ENCODE measurements at regions of chr7 and their contacts with region 1.

Region 1: DNA sequence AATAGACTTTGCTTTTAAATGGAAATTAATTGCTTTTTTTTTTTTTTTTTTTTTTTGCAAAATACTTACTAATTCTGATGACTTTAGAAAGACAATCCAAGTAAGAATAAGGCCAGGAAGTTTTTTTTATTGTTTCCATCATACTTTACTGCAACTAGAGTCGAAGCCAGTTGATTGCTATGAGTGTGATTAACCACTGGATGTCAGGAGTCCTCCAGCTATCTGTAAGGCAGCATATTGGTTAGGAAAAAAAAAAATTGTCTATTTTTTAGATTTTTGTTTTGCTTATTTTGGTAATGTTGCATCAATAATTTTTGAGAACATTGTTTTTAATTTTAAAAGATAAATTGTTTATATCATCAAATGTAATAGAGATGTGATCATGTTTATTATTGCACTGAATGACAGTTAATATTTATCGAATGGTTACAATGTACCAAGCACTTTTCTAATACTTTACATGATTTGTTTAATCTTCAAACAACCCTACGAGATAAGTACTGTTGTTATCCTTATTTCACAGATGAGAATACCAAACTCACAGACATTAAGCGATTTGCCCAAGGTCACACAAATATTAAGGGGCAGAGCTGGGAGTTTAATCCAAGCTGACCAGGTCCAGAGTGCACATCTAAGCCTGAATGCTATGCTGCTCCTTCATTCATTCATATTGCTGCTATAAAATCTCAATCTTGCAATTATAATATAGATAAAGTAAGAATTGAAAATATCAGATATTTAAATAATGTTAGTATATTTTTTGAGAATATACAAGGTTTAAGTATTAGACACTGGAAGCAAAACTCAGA is 19.9 kb upstream of the LMOD2 start:
- DNase-seq: peak; percentile 64
- H3K4me3 ChIP-seq: no peak overlapping the region
- H3K27ac ChIP-seq: peak overlapping the region; percentile 18
- H3K4me1 ChIP-seq: peaks cover 28% of the 10 kb centered on the region
- H3K27me3 ChIP-seq: no peaks in the 10 kb centered on the region
- CTCF ChIP-seq: peak; percentile 44 to 52
- POLR2A ChIP-seq: no peak

Region 2: DNA sequence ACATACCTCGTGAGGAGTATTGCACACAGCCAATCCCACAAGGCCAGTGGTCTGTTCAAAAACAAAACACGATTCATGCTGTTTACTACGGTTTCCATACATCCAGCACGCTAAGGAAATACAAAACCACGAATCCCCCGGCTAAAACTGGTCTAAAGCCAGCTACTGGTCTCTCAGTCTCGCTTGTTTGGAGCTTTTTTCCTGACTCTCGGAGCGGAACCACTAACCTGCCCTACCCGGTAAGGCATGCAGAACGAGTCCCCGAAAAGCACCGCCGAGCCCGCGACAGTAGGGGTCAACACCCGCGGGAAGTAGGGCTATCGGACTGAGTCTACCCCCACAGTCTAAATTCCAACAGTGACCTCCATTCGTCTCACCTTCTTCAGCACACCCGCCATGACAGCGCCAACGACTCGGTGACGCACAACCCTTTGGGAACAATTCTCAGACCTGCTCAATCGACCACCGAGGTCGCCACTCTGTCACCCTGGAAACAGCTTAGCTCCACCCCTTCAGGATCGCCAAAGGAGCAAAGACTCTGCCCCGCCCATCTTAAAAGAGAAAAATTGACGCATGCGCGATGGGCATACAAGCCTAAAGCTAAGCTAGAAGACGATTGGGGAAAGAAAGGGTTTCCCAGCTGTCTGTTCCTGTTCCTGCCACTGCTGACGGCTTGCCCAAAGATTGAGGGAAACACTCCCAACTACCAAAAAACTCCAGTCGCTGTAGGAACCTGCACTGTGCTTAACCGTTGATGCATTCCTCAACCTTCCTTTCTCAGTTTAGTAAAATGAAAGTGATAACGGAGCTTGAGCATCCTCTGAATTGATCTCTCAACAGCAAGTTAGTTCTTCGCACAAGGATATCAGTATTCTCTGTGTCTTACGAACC is 78.1 kb before region 1 on chr7 and contains the start of gene NDUFA5:
- CTCF ChIA-PET with region 1: interaction called, 3 read pairs
- POLR2A ChIA-PET with region 1: no interaction called
- dilution Hi-C with region 1: no loop called
- intact Hi-C with region 1: loop called (anchors 1 kb)
- DNase-seq: peak; percentile 99
- H3K4me3 ChIP-seq: peak within 1 kb of the TSS; percentile 66 to 98 (median 88)
- H3K27ac ChIP-seq: peak within 1 kb of the TSS; percentile 75
- H3K4me1 ChIP-seq: peaks cover 6% of the 10 kb centered on the region
- H3K27me3 ChIP-seq: no peaks in the 10 kb centered on the region
- CTCF ChIP-seq: no peak
- POLR2A ChIP-seq: peak; percentile 76
- total RNA-seq, gene NDUFA5: 57.6 and 62.3 TPM in 2 replicates

Region 3: GRCh38 chr7:123705211-123705901 is 69.6 kb after region 1 on chr7:
- CTCF ChIA-PET with region 1: interaction called, 71 read pairs
- POLR2A ChIA-PET with region 1: no interaction called
- dilution Hi-C with region 1: no loop called
- intact Hi-C with region 1: loop called (anchors 1 kb)
- DNase-seq: no peak
- H3K4me3 ChIP-seq: no peak overlapping the region
- H3K27ac ChIP-seq: no peak overlapping the region
- H3K4me1 ChIP-seq: no peaks in the 10 kb centered on the region
- H3K27me3 ChIP-seq: no peaks in the 10 kb centered on the region
- CTCF ChIP-seq: no peak
- POLR2A ChIP-seq: no peak

Region 4: GRCh38 chr7:123865517-123866117 is 229.9 kb after region 1 on chr7:
- CTCF ChIA-PET with region 1: interaction called, 85 read pairs
- POLR2A ChIA-PET with region 1: no interaction called
- dilution Hi-C with region 1: no loop called
- intact Hi-C with region 1: loop called (anchors 1 kb)
- DNase-seq: peak; percentile 84
- H3K4me3 ChIP-seq: no peak overlapping the region
- H3K27ac ChIP-seq: peak overlapping the region; percentile 34
- H3K4me1 ChIP-seq: peaks cover 9% of the 10 kb centered on the region
- H3K27me3 ChIP-seq: no peaks in the 10 kb centered on the region
- CTCF ChIP-seq: peak; percentile 41 to 56
- POLR2A ChIP-seq: no peak

Region 5: GRCh38 chr7:124085179-124085578 is 449.4 kb after region 1 on chr7:
- CTCF ChIA-PET with region 1: no interaction called
- POLR2A ChIA-PET with region 1: no interaction called
- dilution Hi-C with region 1: no loop called
- intact Hi-C with region 1: loop called (anchors 1 kb)
- DNase-seq: peak; percentile 99
- H3K4me3 ChIP-seq: no peak overlapping the region
- H3K27ac ChIP-seq: peak overlapping the region; percentile 38
- H3K4me1 ChIP-seq: peaks cover 23% of the 10 kb centered on the region
- H3K27me3 ChIP-seq: no peaks in the 10 kb centered on the region
- CTCF ChIP-seq: no peak
- POLR2A ChIP-seq: no peak

Region 6: GRCh38 chr7:124856299-124856888 is 1220.6 kb after region 1 on chr7:
- CTCF ChIA-PET with region 1: no interaction called
- POLR2A ChIA-PET with region 1: no interaction called
- dilution Hi-C with region 1: no loop called
- intact Hi-C with region 1: loop called (anchors 5 kb)
- DNase-seq: peak; percentile 61
- H3K4me3 ChIP-seq: no peak overlapping the region
- H3K27ac ChIP-seq: no peak overlapping the region
- H3K4me1 ChIP-seq: no peaks in the 10 kb centered on the region
- H3K27me3 ChIP-seq: no peaks in the 10 kb centered on the region
- CTCF ChIP-seq: peak; percentile 31 to 44
- POLR2A ChIP-seq: no peak

Measured in endothelial cell of umbilical vein (primary cell).